K562 (cell line): ENCODE measurements at regions of chr11 and their contacts with region 1.

Region 1: DNA sequence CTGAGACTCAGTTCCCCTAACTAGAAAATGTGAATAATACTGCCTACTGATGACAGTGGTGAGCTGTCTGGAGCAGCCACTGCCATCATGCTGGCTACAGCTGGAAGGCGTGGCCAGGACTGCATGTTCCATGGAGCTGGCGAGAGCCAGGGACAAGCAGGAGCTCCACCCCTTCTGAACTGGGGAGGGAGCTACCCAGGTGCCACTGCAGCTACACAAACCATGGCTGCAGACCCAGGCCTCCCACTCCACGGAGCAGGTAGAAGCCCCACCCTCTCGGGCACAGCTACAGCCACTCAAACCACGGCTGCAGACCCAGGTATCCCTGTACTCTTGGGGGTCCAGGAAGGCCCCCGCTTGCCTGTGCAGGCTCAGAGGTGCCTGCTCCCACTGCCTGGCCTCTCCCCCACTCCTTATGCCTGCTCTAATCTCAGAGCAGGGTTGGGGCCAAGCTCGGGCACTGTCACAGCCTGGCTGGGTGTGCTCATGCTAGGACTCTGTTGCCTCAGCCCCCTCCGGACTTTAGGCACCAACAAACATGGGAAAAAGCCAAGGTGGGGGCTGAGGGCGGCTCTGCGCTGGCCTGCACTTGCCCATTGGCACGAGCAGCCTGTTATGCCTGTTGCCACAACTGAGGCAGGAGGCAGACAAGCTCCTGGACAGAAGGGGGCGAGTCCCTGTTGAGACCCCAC is 51.7 kb downstream of the RAB30 start:
- DNase-seq: no peak
- ATAC-seq: peak; percentile 79
- H3K4me3 ChIP-seq: no peak overlapping the region
- H3K27ac ChIP-seq: no peak overlapping the region
- H3K4me1 ChIP-seq: peaks cover 0 to 12% of the 10 kb centered on the region in 2 experiments; a peak in 1 of 5 replicates
- H3K27me3 ChIP-seq: peaks cover 0 to 18% of the 10 kb centered on the region in 2 experiments; a peak in 3 of 5 replicates
- CTCF ChIP-seq: no peak
- EP300 ChIP-seq: no peak
- POLR2A ChIP-seq: no peak
- RAD21 ChIP-seq: no peak

Region 2: DNA sequence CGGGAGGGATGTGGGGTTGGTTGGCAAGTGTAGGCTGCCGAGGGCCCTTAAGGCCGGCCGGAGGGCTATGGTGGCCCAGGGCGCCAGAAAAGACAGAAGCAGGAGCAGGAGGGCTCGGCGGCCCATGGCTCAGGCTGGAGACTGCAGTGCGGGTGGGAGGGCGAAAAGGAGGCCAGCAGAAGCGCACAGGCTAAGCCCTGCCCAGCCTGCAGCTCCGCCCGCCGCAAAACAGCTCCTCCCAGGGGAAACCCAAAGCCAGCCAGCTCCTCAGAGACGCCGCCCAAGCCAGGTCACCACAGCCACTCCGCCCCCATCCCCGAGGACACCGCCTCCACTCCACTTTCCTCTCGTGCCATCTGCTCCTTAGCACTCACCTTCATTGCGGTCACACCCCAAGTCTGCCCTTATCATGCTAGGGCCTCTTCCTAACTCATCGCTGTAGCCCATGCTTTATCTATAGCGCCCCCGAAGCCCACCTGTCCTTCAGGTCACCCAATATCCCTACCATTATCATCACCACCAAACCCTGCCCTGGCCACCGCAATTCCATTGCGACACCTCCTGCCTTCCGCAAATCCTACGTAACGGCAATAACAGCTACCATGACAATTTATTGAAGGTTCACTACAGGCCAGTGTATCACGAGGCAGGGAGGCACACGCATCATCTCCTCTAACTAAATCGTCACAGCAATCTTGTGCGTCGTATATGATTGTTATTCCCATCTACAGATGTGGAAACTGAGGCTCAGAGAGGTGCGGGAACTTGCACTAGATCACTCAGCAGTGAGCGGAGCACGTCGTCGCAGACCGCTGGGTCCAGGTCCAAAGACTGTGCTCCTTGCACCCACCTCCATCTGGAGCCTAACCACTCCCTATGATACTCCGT is 119.5 kb before region 1 on chr11 and contains the start of gene PRCP:
- CTCF ChIA-PET with region 1: no interaction called
- POLR2A ChIA-PET with region 1: no interaction called
- in situ Hi-C with region 1: no loop called
- intact Hi-C with region 1: no loop called
- DNase-seq: peak; percentile 87 to 94 (median 90)
- ATAC-seq: peak; percentile 92
- H3K4me3 ChIP-seq: peak within 1 kb of the TSS; percentile 69
- H3K27ac ChIP-seq: peak within 1 kb of the TSS; percentile 77
- H3K4me1 ChIP-seq: peaks cover 8 to 24% of the 10 kb centered on the region in 2 experiments
- H3K27me3 ChIP-seq: no peaks in the 10 kb centered on the region
- CTCF ChIP-seq: 0 out of 6 replicates have a peak, but pooled peaks of 1 of the 3 experiments have one; percentile 5
- EP300 ChIP-seq: peak; percentile 21; the same call in 1 of the 2 replicates
- POLR2A ChIP-seq: peak; percentile 86
- RAD21 ChIP-seq: no peak
- polyA plus RNA-seq, gene PRCP: 28.5 to 34.9 TPM

Region 3: GRCh38 chr11:83033972-83034672 is 14.1 kb after region 1 on chr11:
- CTCF ChIA-PET with region 1: no interaction called
- POLR2A ChIA-PET with region 1: interaction called, 5 read pairs
- in situ Hi-C with region 1: no loop called
- intact Hi-C with region 1: loop called (anchors 1 kb)
- DNase-seq: peak in 1 of 4 experiments; percentile 47
- ATAC-seq: peak; percentile 78
- H3K4me3 ChIP-seq: no peak overlapping the region
- H3K27ac ChIP-seq: no peak overlapping the region
- H3K4me1 ChIP-seq: peaks cover 4 to 7% of the 10 kb centered on the region in 2 experiments; a peak in 3 of 5 replicates
- H3K27me3 ChIP-seq: no peaks in the 10 kb centered on the region; a peak in 1 of 5 replicates
- CTCF ChIP-seq: no peak
- EP300 ChIP-seq: peak; percentile 23; the same call in 1 of the 2 replicates
- POLR2A ChIP-seq: no peak
- RAD21 ChIP-seq: no peak